ENCODE measurements at regions of chr5 and their contacts with region 1.

Region 1: GRCh38 chr5:96934708-96935558 is 947 bp upstream of the LNPEP start:
- DNase-seq: peak; percentile 96
- H3K4me3 Mint-ChIP-seq: peak overlapping the region; percentile 97
- H3K27ac Mint-ChIP-seq: peak overlapping the region; percentile 98
- H3K4me1 Mint-ChIP-seq: peaks cover 67% of the 10 kb centered on the region
- H3K27me3 Mint-ChIP-seq: no peaks in the 10 kb centered on the region

Region 2: DNA sequence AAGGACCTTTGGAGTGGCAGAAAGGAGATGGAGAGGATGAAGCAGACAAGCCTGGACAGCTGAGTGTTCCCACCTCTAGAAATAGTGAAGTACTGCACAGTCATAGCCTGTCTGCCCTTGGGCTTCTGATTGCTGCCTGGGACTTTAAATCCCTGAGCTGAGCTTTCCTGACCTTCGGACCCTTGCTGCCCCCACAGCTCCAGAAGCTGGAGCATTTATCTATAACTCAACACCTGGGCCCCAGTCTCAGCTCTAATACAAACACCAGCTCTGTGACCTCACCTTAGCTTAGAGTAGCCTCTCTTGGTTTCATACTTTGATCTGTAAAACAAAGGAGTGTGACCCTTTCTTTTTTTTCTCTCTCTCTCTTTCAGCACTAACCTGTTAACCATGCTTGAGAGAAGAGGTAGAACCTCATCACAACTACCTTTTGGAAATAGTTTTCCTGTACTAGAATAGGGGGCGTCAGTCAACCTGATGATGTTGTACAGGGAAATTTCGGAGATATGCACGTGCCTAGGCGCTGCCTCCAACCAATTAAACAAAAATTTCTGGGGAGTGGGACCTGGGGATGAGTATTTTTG is 947.9 kb before region 1 on chr5:
- intact Hi-C with region 1: no loop called
- DNase-seq: no peak
- H3K4me3 Mint-ChIP-seq: no peak overlapping the region
- H3K27ac Mint-ChIP-seq: no peak overlapping the region
- H3K4me1 Mint-ChIP-seq: no peaks in the 10 kb centered on the region
- H3K27me3 Mint-ChIP-seq: no peaks in the 10 kb centered on the region

Region 3: DNA sequence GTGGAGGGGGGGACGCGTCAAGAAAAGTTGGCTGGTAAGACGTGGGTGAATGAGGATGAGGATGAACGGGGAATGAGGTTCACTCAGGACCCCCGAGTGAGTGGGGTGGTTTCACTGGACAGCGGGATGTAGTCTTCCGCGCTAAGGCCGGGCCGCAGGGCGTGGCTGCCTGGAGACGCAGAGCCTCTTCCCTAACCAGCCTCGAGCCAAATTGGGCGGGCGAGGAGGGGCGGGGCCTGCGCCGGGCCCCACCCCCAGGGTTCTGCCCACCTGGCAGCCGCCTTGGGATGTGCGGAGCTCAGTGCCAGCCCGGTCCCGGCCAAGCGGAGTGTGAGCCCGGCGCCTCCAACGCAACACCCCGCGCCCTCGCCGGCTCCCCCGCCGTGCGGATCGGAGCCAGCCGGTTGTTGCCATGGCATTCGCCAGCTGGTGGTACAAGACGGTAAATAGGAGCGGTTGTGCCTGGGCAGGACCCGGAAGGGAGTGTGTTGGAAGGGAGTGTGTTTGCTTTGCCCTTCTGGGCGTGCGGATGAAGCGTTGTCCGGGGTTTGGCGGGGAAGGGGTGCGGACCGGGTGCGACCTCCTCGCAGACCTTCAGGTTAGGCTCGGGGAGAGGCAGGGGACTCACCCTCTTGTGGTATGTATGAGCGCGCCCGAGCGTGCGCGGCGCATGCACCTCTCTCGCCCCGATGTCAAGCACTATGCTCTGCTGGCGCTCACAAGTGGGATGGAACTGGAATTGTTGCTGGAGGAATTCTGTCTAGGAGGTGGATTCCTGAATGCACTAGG is 272.0 kb before region 1 on chr5:
- intact Hi-C with region 1: loop called (anchors 1 kb)
- DNase-seq: peak; percentile 82
- H3K4me3 Mint-ChIP-seq: peak overlapping the region; percentile 98
- H3K27ac Mint-ChIP-seq: peak overlapping the region; percentile 98
- H3K4me1 Mint-ChIP-seq: peaks cover 67% of the 10 kb centered on the region
- H3K27me3 Mint-ChIP-seq: peaks cover 11% of the 10 kb centered on the region

Region 4: DNA sequence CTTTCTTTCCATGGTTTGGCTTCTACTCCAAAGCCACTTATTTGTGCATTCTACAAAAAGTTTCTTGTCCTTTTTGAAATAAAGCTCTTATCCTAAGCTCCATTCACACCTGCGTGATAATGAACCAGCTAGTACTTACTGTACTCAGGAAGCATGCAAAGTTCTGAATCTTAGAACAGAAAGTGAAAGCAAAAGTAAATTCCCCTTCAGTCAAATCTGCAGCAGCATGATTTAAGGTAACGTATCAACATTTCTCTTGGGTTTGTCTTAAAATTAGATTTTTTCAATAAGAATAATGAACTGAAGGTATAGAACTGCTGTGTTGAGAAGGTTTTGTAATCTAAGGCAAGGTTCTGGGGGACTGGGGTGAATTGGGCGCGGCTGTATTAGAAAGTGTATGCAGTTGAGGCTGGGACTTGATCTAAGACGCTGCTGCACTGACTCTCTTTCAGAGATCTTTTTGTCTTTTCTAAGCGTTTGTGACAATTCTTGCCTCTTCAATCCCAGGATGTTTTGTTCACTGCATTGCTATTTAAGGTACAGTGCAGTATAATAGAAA is 58.6 kb before region 1 on chr5 and contains the start of gene ERAP2:
- intact Hi-C with region 1: loop called (anchors 1 kb)
- DNase-seq: no peak
- H3K4me3 Mint-ChIP-seq: peak within 1 kb of the TSS; percentile 93
- H3K27ac Mint-ChIP-seq: peak within 1 kb of the TSS; percentile 99
- H3K4me1 Mint-ChIP-seq: peaks cover 66% of the 10 kb centered on the region
- H3K27me3 Mint-ChIP-seq: no peaks in the 10 kb centered on the region
- total RNA-seq, gene ERAP2: 52.9 and 54.4 TPM in 2 replicates

Region 5: DNA sequence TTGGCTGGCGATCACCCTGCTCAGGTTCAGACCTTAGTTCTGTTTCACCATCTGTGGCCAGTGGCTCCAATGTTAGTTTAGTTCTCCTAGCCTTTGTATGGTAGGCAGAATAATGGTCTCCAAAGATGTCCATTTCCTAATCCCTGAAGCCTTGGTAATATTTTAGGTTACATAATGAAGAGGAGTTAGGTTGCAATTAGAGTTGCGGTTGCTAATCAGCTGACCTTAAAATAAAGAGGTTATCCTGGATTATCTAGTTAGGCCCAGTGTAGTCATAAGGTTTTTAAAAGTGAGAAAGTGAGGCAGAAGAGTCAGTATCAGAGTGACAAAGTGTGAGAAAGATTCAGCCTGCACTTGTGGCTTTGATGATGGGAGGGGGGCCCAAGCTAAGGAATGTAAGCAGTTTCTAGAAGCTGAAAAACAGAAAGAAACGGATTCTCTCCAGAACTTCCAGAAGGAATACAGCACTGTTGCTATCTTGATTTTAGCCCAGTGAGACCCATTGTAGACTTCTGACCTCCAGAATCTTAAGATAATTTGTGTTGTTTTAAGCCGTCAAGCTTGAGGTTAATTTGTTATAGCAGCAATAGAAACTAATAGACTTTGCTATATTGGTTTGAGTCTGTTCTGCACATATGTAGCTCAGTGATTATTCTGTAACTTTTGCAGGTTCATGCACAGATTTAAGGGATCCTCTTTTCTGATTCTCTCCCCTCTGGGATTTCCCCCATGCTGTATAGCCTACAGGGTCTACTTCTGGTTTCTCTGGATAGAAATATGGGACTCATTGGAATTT is 22.5 kb after region 1 on chr5:
- intact Hi-C with region 1: loop called (anchors 1 kb)
- DNase-seq: no peak
- H3K4me3 Mint-ChIP-seq: peak overlapping the region; percentile 63
- H3K27ac Mint-ChIP-seq: peak overlapping the region; percentile 65
- H3K4me1 Mint-ChIP-seq: peaks cover 71% of the 10 kb centered on the region
- H3K27me3 Mint-ChIP-seq: no peaks in the 10 kb centered on the region

Region 6: GRCh38 chr5:97004423-97005060 is 69.6 kb after region 1 on chr5:
- intact Hi-C with region 1: loop called (anchors 2 kb)
- DNase-seq: no peak
- H3K4me3 Mint-ChIP-seq: no peak overlapping the region
- H3K27ac Mint-ChIP-seq: peak overlapping the region; percentile 32
- H3K4me1 Mint-ChIP-seq: peaks cover 15% of the 10 kb centered on the region
- H3K27me3 Mint-ChIP-seq: no peaks in the 10 kb centered on the region

Region 7: GRCh38 chr5:97183100-97183929 is 248.4 kb after region 1 on chr5 and contains the start of gene RIOK2:
- intact Hi-C with region 1: loop called (anchors 1 kb)
- DNase-seq: peak; percentile 86
- H3K4me3 Mint-ChIP-seq: peak within 1 kb of the TSS; percentile 91
- H3K27ac Mint-ChIP-seq: peak within 1 kb of the TSS; percentile 100
- H3K4me1 Mint-ChIP-seq: peaks cover 42% of the 10 kb centered on the region
- H3K27me3 Mint-ChIP-seq: peaks cover 9% of the 10 kb centered on the region
- total RNA-seq, gene RIOK2: 37.2 and 47.2 TPM in 2 replicates